ENCODE measurements at regions of chr3 and their contacts with region 1.

Region 1: GRCh38 chr3:156174229-156174847 is 54.0 kb downstream of the KCNAB1 start:
- DNase-seq: no peak
- H3K4me3 ChIP-seq: no peak overlapping the region
- H3K27ac ChIP-seq: no peak overlapping the region
- H3K4me1 ChIP-seq: no peaks in the 10 kb centered on the region
- H3K27me3 ChIP-seq: no peaks in the 10 kb centered on the region
- CTCF ChIP-seq: peak in 2 of 3 experiments; percentile 43 to 62; a peak in 3 of 4 replicates
- EP300 ChIP-seq: no peak
- POLR2A ChIP-seq: no peak
- RAD21 ChIP-seq: peak; percentile 80 to 84

Region 2: GRCh38 chr3:156298014-156298413 is 123.7 kb after region 1 on chr3:
- CTCF ChIA-PET with region 1: no interaction called
- POLR2A ChIA-PET with region 1: no interaction called
- DNase-seq: no peak
- H3K4me3 ChIP-seq: no peak overlapping the region
- H3K27ac ChIP-seq: no peak overlapping the region
- H3K4me1 ChIP-seq: no peaks in the 10 kb centered on the region
- H3K27me3 ChIP-seq: peaks cover 0 to 6% (median 0%) of the 10 kb centered on the region in 4 experiments; a peak in 4 of 7 replicates
- CTCF ChIP-seq: no peak
- EP300 ChIP-seq: no peak
- POLR2A ChIP-seq: no peak
- RAD21 ChIP-seq: no peak

Region 3: DNA sequence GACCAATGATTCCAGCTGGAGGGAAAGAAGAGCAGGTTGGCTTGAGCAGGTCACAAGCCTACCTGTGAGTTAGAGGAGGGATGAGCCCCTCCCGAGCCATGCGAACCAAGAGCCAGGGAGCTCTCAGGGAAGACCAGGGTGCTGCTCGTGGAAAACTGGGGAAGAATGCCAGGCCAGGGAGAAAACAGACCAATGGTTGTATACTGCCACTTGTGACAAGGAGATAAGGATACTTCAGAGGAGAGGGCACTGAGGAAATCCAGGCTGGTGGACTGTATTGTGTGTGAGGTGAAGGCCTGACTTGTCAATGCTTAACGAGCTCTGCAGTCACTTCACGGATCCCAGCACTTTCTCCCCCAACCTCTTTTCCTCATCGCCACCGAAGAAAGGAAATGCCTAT is 202.9 kb after region 1 on chr3:
- CTCF ChIA-PET with region 1: interaction called, 38 read pairs
- POLR2A ChIA-PET with region 1: no interaction called
- DNase-seq: no peak
- H3K4me3 ChIP-seq: no peak overlapping the region
- H3K27ac ChIP-seq: no peak overlapping the region
- H3K4me1 ChIP-seq: peaks cover 5 to 13% (median 9%) of the 10 kb centered on the region in 4 experiments; a peak in 6 of 7 replicates
- H3K27me3 ChIP-seq: no peaks in the 10 kb centered on the region
- CTCF ChIP-seq: no peak
- EP300 ChIP-seq: no peak
- POLR2A ChIP-seq: no peak
- RAD21 ChIP-seq: no peak

Measured in H1 (cell line).